MCF 10A (cell line): ENCODE measurements at regions of chr9 and their contacts with region 1.

Region 1: DNA sequence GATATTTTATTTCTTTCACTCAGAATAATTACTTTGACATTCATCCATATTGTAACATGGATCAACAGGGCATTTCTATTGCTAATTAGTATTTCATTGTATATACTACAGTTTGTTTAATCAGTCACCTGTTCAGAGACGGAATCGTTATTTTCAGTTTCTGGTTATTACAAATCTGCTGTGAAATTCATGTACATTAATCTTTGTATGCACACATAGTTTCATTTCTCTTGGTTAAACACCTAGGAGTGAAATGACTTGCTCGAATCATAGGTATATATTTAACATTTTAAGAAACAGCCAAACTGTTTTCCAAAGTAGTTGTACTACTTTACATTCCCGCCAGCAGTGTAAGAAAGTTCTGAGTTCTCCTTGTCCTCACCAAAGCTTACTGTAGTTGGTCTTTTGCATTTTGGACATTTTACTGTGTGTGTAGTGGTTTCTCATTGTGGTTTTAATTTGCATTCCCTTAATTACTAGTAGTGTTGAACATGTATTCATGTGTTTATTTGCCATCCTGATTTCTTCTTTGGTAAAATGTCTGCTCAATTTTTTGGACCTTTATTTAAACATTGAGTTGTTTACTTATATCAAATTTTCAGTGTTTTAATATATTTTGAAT is 198.2 kb downstream of the SAXO1 start:
- DNase-seq: no peak
- H3K4me3 Mint-ChIP-seq: no peak overlapping the region
- H3K27ac Mint-ChIP-seq: no peak overlapping the region
- H3K4me1 Mint-ChIP-seq: no peaks in the 10 kb centered on the region
- H3K27me3 Mint-ChIP-seq: no peaks in the 10 kb centered on the region
- CTCF ChIP-seq: no peak

Region 2: GRCh38 chr9:18849890-18850677 is 15.2 kb after region 1 on chr9:
- CTCF ChIA-PET with region 1: interaction called, 4 read pairs
- POLR2A ChIA-PET with region 1: no interaction called
- intact Hi-C with region 1: loop called (anchors 1 kb)
- DNase-seq: no peak
- H3K4me3 Mint-ChIP-seq: no peak overlapping the region
- H3K27ac Mint-ChIP-seq: no peak overlapping the region
- H3K4me1 Mint-ChIP-seq: no peaks in the 10 kb centered on the region
- H3K27me3 Mint-ChIP-seq: no peaks in the 10 kb centered on the region
- CTCF ChIP-seq: no peak